ENCODE measurements at regions of chr3 and their contacts with region 1.

Region 1: GRCh38 chr3:122178711-122179110 is 4.8 kb upstream of the CASR start:
- DNase-seq: no peak
- ATAC-seq: no peak
- H3K4me3 ChIP-seq: no peak overlapping the region
- H3K27ac ChIP-seq: no peak overlapping the region
- H3K4me1 ChIP-seq: peaks cover 0 to 3% (median 0%) of the 10 kb centered on the region in 12 donors
- H3K27me3 ChIP-seq: peaks cover 2 to 34% (median 16%) of the 10 kb centered on the region in 9 donors
- CTCF ChIP-seq: no peak
- POLR2A ChIP-seq: no peak

Region 2: GRCh38 chr3:122190525-122190924 is 11.8 kb after region 1 on chr3:
- intact Hi-C with region 1: loop called in 1 of 10 experiments (anchors 1 kb)
- DNase-seq: no peak
- ATAC-seq: no peak
- H3K4me3 ChIP-seq: no peak overlapping the region
- H3K27ac ChIP-seq: no peak overlapping the region
- H3K4me1 ChIP-seq: no peaks in the 10 kb centered on the region
- H3K27me3 ChIP-seq: peaks cover 0 to 30% (median 5%) of the 10 kb centered on the region in 9 donors
- CTCF ChIP-seq: no peak
- POLR2A ChIP-seq: no peak

Region 3: GRCh38 chr3:122468896-122469533 is 290.3 kb after region 1 on chr3:
- intact Hi-C with region 1: no loop called
- DNase-seq: no peak
- ATAC-seq: no peak
- H3K4me3 ChIP-seq: no peak overlapping the region
- H3K27ac ChIP-seq: no peak overlapping the region
- H3K4me1 ChIP-seq: peaks cover 0 to 27% (median 8%) of the 10 kb centered on the region in 12 donors
- H3K27me3 ChIP-seq: no peaks in the 10 kb centered on the region
- CTCF ChIP-seq: no peak
- POLR2A ChIP-seq: no peak

Region 4: DNA sequence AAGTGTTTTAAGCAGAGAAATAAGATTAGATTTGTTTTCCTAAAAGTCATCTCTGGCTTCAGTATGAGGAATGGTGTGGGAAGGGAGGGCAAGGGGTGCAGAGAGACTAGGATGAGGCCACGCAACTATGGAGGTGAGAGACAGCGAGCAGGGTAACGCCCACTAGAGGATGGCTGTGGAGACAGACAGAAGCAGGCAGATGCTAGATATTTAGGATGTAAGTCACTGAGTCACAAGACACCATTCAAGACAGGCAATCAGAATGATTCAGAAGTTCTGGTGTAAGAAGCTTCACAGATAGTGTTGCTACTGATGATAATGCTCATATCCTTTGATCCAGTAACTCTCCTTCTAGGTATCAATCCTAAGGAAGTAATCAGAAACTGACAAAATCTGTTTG is 595.9 kb after region 1 on chr3:
- intact Hi-C with region 1: no loop called
- DNase-seq: no peak
- ATAC-seq: no peak
- H3K4me3 ChIP-seq: no peak overlapping the region
- H3K27ac ChIP-seq: peak overlapping the region in 1 of 12 donors; percentile 59
- H3K4me1 ChIP-seq: peaks cover 0 to 23% (median 0%) of the 10 kb centered on the region in 12 donors
- H3K27me3 ChIP-seq: no peaks in the 10 kb centered on the region
- CTCF ChIP-seq: no peak
- POLR2A ChIP-seq: no peak

Measured in heart left ventricle (tissue), 16 donors.